ENCODE measurements at regions of chr10 and their contacts with region 1.

Region 1: GRCh38 chr10:121831777-121832176 is 96.1 kb downstream of the ATE1 start:
- DNase-seq: peak in 1 of 2 experiments; percentile 49
- H3K4me3 ChIP-seq: no peak overlapping the region
- H3K4me3 Mint-ChIP-seq: peak overlapping the region; percentile 24
- H3K27ac Mint-ChIP-seq: peak overlapping the region; percentile 46
- H3K4me1 ChIP-seq: peaks cover 54% of the 10 kb centered on the region
- H3K4me1 Mint-ChIP-seq: peaks cover 53% of the 10 kb centered on the region
- H3K27me3 ChIP-seq: no peaks in the 10 kb centered on the region
- H3K27me3 Mint-ChIP-seq: no peaks in the 10 kb centered on the region
- CTCF ChIP-seq: no peak

Region 2: DNA sequence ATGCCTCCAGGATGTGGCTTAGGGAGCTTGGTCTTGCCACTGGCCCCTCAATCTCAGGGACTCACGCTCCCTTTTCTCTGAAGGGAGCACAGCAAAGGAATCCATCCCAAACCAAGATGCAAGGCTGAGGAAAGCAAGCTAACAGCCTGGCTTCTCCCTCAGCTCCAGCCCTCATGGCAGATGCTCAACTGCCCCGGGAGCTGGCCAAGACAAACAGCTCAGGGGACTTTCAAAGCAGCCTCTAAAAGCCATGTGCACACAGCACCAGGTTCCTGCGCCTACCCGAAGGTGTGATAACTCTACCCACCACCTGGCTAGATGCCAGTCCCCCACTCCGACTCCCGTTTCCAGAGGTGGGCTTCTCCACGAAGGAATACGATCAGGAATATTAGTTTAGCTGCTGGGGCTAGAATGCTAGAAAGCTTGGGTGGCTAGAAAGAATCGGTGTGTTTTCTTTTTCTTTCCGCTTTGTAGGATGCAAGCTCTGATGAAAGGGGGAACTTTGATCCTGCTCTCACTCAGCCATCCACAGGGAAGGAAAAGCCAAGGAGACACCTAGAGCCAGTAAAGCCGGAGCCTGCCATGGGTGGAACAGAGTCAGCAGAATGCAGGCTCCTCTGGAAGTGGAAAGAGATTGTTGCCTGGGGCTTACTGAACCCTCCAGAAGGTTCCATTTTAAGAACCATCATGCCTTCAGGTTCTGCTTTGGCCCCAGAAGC is 144.5 kb before region 1 on chr10:
- CTCF ChIA-PET with region 1: no interaction called
- POLR2A ChIA-PET with region 1: no interaction called
- intact Hi-C with region 1: loop called (anchors 5 kb)
- DNase-seq: no peak
- H3K4me3 ChIP-seq: no peak overlapping the region
- H3K4me3 Mint-ChIP-seq: no peak overlapping the region
- H3K27ac Mint-ChIP-seq: no peak overlapping the region
- H3K4me1 ChIP-seq: peaks cover 41% of the 10 kb centered on the region
- H3K4me1 Mint-ChIP-seq: peaks cover 32% of the 10 kb centered on the region
- H3K27me3 ChIP-seq: no peaks in the 10 kb centered on the region
- H3K27me3 Mint-ChIP-seq: no peaks in the 10 kb centered on the region
- CTCF ChIP-seq: no peak

Region 3: DNA sequence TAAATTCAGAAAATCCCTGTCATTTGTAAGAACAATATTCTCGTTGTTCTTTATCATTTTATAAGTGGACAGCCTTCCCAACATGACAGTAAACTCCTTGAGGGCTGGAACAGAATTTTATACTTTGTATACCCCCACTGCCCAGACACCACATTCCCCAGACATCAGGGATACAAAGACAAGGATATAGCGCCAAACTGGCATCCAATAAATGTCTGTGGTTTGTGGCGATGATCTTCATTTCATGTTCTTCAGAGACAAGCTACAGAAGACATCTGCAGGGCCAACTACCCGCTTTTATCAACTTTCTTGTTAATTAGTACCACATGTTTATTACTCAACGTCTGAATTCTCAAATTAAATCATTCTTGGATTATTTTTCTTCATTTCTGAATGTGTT is 59.8 kb before region 1 on chr10:
- CTCF ChIA-PET with region 1: interaction called, 6 read pairs
- POLR2A ChIA-PET with region 1: interaction called, 4 read pairs
- intact Hi-C with region 1: loop called (anchors 1 kb)
- DNase-seq: no peak
- H3K4me3 ChIP-seq: no peak overlapping the region
- H3K4me3 Mint-ChIP-seq: peak overlapping the region; percentile 40
- H3K27ac Mint-ChIP-seq: peak overlapping the region; percentile 67
- H3K4me1 ChIP-seq: peaks cover 67% of the 10 kb centered on the region
- H3K4me1 Mint-ChIP-seq: peaks cover 17% of the 10 kb centered on the region
- H3K27me3 ChIP-seq: no peaks in the 10 kb centered on the region
- H3K27me3 Mint-ChIP-seq: no peaks in the 10 kb centered on the region
- CTCF ChIP-seq: no peak

Measured in Caco-2 (cell line).